Panc1 (cell line): ENCODE measurements at regions of chr3 and their contacts with region 1.

Region 1: GRCh38 chr3:133441867-133442270 is 42.0 kb downstream of the BFSP2 start:
- DNase-seq: no peak
- ATAC-seq: no peak
- H3K4me3 ChIP-seq: 0 out of 4 replicates have a peak overlapping the region, but pooled peaks of 1 of the 2 experiments have one; percentile 0
- H3K27ac ChIP-seq: peak overlapping the region; percentile 92
- H3K4me1 ChIP-seq: peaks cover 37% of the 10 kb centered on the region
- H3K27me3 ChIP-seq: no peaks in the 10 kb centered on the region
- CTCF ChIP-seq: no peak

Region 2: DNA sequence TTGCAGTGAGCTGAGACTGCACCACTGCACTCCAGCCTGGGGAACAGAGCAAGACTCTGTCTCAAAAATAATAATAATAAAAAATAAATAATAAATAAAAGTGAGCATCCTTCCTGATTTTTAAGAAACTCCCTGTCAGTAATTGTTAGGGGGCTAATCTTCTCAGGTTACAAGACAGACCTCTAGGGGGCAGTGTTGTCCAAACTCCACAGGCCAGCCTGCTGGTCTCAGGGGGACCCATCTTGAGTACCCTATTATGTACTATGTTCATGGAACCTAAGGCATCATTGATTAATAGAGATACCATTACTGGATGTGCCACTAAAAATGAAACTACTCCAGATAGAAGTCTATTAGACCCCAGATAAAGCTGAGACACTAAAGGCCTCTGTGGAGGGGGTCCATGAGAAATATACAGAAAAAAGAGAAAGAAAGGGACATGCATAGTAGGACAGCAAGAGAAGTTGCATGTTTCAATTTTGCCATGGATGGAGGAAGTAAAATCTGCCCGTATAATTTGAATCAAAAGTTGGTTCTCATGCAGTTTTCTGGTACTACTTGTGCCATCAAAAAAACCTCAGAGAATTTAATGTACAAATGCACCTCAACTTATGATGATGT is 46.2 kb after region 1 on chr3:
- CTCF ChIA-PET with region 1: no interaction called
- POLR2A ChIA-PET with region 1: no interaction called
- in situ Hi-C with region 1: no loop called
- intact Hi-C with region 1: no loop called
- DNase-seq: no peak
- ATAC-seq: no peak
- H3K4me3 ChIP-seq: no peak overlapping the region
- H3K27ac ChIP-seq: no peak overlapping the region
- H3K4me1 ChIP-seq: no peaks in the 10 kb centered on the region
- H3K27me3 ChIP-seq: no peaks in the 10 kb centered on the region
- CTCF ChIP-seq: no peak; the same call in 1 of the 2 replicates

Region 3: GRCh38 chr3:133509488-133509887 is 67.6 kb after region 1 on chr3:
- CTCF ChIA-PET with region 1: no interaction called
- POLR2A ChIA-PET with region 1: no interaction called
- in situ Hi-C with region 1: no loop called
- intact Hi-C with region 1: no loop called
- DNase-seq: no peak
- ATAC-seq: no peak
- H3K4me3 ChIP-seq: no peak overlapping the region
- H3K27ac ChIP-seq: no peak overlapping the region
- H3K4me1 ChIP-seq: peaks cover 10% of the 10 kb centered on the region
- H3K27me3 ChIP-seq: no peaks in the 10 kb centered on the region
- CTCF ChIP-seq: no peak

Region 4: DNA sequence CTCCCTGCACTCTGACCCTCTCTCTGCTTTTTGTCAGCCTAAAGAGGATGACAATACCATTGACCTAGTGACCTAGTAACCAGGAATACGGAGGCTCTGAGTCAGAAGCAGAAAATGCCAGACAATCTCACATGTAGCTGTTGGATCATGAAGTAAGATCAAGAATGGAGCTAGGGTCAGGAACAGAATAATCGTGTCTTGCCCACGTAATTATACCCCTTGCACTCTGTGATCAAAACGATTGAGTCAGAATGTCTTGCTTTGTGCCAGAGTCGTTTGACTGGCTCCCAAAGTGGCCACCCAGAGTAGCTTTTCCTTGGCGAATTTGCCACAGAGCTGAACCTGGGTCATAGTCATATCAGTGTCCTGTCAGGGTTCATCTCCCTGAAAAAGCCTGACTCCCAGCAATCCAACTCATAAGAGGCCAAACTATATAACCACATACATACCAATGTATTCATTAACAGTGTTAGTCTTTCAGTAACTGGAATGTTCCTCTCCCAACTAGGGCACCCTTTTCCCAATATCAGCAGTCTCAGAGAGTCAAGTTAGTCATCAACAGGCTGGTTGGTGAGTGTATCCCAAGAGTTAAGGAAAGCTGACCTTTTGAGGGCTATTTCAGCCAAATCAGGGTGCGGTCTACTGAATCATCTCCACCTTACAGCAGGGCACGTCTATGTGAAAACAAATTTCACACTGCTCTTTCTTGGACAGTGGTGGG is 126.6 kb after region 1 on chr3:
- CTCF ChIA-PET with region 1: no interaction called
- POLR2A ChIA-PET with region 1: interaction called, 14 read pairs
- in situ Hi-C with region 1: no loop called
- intact Hi-C with region 1: no loop called
- DNase-seq: peak; percentile 79
- ATAC-seq: peak; percentile 12; the same call in 1 of the 2 replicates
- H3K4me3 ChIP-seq: no peak overlapping the region
- H3K27ac ChIP-seq: peak overlapping the region; percentile 97
- H3K4me1 ChIP-seq: peaks cover 34% of the 10 kb centered on the region
- H3K27me3 ChIP-seq: no peaks in the 10 kb centered on the region
- CTCF ChIP-seq: no peak